IMR-90 (cell line): ENCODE measurements at regions of chr2 and their contacts with region 1.

Region 1: GRCh38 chr2:61085883-61086282 is 20.2 kb downstream of the SANBR start:
- DNase-seq: no peak
- ATAC-seq: no peak
- H3K4me3 ChIP-seq: no peak overlapping the region
- H3K27ac ChIP-seq: no peak overlapping the region
- H3K4me1 ChIP-seq: no peaks in the 10 kb centered on the region
- H3K27me3 ChIP-seq: no peaks in the 10 kb centered on the region
- CTCF ChIP-seq: no peak
- POLR2A ChIP-seq: no peak
- RAD21 ChIP-seq: no peak

Region 2: GRCh38 chr2:61109291-61109690 is 23.4 kb after region 1 on chr2:
- CTCF ChIA-PET with region 1: no interaction called
- POLR2A ChIA-PET with region 1: interaction called, 13 read pairs
- dilution Hi-C with region 1: no loop called
- in situ Hi-C with region 1: no loop called
- intact Hi-C with region 1: no loop called
- DNase-seq: no peak
- ATAC-seq: no peak
- H3K4me3 ChIP-seq: no peak overlapping the region
- H3K27ac ChIP-seq: no peak overlapping the region
- H3K4me1 ChIP-seq: no peaks in the 10 kb centered on the region
- H3K27me3 ChIP-seq: no peaks in the 10 kb centered on the region
- CTCF ChIP-seq: no peak
- POLR2A ChIP-seq: no peak
- RAD21 ChIP-seq: no peak